Activated T-helper 1 cell treated with anti-CD3 and anti-CD28 coated beads, Interleukin-12 subunit alpha, Interleukin-12 subunit beta, Interleukin-2, Interleukin-4 antibody, amounts not matched to agents 30 ng/mL and 10 ng/mL and 1 ng/mL, durations not matched to agents 14 hours and 24 hours and 36 hours (primary cell): ENCODE measurements at regions of chr3 and their contacts with region 1.

Region 1: DNA sequence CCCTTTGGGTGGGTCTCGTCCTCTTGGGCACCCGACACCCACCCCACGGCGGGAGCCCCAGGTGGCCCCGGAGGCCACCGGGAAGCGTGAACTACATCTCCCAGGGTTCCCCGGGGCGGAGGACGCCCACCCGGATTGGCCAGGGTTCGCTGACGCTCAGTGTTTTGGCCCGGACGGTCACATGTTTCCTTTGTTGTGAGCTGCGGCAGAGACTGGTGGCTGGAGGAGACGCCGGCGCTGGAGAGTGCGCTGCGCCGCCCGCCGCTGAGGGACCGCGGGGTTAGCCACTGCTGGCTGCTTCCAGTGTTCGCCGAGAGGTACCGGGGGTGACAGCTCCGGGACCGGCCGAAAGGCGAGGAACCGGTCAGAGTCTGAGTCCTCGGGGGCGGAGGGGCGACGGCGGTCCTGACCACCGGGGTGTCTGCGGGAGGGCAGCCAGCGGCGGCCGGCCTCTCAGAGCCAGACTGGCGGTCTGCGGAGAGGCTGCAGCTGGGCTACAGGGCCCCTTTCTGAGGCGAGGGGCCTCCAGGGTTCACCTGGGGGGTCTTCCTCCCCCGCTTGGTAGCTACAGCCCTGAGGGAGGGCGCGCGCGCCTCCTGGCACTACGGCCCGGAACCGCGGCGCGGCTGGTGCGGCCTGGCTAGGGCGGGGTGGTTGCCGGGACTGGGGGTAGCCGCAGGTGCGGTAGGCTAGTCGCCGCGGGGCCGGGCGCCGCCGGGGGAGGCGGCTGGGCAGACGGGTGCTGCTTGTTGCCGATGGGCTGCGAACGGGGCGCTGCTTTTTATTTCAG is at the start of gene KLHL24:
- DNase-seq: peak; percentile 89
- H3K4me3 Mint-ChIP-seq: peak within 1 kb of the TSS; percentile 92
- H3K27ac Mint-ChIP-seq: peak within 1 kb of the TSS; percentile 97
- H3K4me1 Mint-ChIP-seq: peaks cover 24% of the 10 kb centered on the region
- H3K27me3 Mint-ChIP-seq: peaks cover 2% of the 10 kb centered on the region
- total RNA-seq, gene KLHL24: 8.2 and 8.7 TPM in 2 replicates

Region 2: DNA sequence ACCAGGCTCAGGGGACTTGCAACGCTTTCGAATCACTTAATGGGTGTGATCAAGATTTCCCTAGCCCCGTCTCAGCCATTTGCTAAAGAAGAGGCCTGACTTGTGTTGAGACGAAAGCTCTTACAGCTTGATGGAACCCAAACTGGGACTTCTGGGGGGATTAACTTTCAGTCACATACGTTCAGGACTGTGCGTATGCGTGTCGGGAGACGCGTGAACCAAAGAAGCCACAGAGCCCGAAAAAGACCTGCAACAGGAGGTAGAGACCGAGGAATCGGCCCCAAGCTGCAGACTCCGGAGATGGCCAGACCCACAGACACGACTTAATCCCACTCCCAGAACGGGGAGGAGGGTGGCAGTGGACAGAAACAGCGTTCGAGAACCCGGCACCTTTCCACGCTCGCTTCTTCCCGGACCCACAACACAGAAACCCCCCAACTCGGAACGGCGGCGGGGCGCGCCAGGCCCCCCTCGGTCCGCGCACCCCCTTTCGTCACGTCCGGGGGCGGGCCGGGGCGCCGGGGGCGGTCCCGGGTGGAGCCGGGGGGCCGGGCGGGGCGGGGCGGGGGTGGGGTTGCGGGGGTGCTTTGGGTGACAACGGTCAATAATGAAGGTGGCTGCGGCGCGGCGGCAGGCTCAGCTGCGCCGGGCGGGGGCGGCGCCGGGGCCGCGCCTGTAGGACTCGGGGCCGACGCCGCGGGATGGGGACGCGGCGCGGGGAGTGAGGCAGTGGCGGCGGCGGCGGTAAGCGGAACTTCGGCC is 842.5 kb before region 1 on chr3 and contains the start of gene ATP11B:
- intact Hi-C with region 1: loop called (anchors 5 kb)
- DNase-seq: peak; percentile 75
- H3K4me3 Mint-ChIP-seq: peak within 1 kb of the TSS; percentile 94
- H3K27ac Mint-ChIP-seq: peak within 1 kb of the TSS; percentile 98
- H3K4me1 Mint-ChIP-seq: peaks cover 34% of the 10 kb centered on the region
- H3K27me3 Mint-ChIP-seq: no peaks in the 10 kb centered on the region
- total RNA-seq, gene ATP11B: 92.3 and 95.1 TPM in 2 replicates

Region 3: GRCh38 chr3:183178629-183179549 is 456.7 kb before region 1 on chr3:
- intact Hi-C with region 1: no loop called
- DNase-seq: peak; percentile 17
- H3K4me3 Mint-ChIP-seq: peak overlapping the region; percentile 79
- H3K27ac Mint-ChIP-seq: peak overlapping the region; percentile 18
- H3K4me1 Mint-ChIP-seq: peaks cover 17% of the 10 kb centered on the region
- H3K27me3 Mint-ChIP-seq: peaks cover 36% of the 10 kb centered on the region

Region 4: DNA sequence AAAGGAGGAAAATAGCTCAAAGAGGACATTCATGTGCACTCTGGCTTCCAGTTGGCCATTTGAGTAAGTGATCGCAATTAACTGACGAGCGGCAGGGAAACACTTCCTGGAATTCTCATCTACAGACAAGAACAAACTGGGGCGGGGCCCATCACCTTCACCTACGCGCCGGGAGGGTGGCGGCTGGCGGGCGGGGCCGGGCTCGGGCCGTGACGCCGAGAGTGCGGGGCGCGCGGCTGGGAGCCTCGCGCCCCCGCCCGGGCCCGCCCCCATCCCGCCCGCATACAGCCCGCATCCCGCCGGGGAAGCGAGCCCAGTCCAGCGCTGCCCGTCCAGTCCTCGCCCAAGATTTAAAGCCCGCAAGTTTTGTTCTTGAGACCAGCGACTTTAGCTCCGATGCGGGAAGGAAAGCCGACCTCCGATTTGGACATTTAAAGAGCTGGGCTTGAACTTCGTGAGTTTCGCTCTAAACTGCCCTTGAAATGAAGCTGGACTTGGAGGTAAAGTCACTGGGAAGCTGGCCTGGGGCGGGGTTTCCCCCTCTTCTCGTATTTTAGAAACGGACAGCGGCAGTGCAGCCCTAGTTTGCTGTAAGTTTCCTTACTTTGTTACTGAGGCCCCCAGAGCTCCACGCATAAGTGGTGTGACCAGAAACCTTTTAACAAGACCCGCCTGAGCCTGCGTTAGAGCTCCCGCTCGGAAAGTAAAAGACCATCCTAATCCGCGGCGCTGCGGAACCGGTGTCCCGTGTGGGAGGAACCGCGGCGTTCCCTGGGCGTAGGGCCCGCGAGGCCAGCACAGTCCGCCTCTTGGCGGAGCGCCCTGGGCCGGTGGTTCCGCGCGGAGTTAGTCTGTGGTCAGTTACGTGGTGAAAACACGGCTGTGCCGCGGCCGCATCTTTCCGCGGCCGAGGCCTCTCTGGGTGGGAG is 382.4 kb before region 1 on chr3 and contains the start of gene B3GNT5:
- intact Hi-C with region 1: loop called (anchors 5 kb)
- DNase-seq: peak; percentile 11
- H3K4me3 Mint-ChIP-seq: peak within 1 kb of the TSS; percentile 81
- H3K27ac Mint-ChIP-seq: peak within 1 kb of the TSS; percentile 52
- H3K4me1 Mint-ChIP-seq: peaks cover 18% of the 10 kb centered on the region
- H3K27me3 Mint-ChIP-seq: peaks cover 10% of the 10 kb centered on the region
- total RNA-seq, gene B3GNT5: 17.0 and 17.7 TPM in 2 replicates

Region 5: DNA sequence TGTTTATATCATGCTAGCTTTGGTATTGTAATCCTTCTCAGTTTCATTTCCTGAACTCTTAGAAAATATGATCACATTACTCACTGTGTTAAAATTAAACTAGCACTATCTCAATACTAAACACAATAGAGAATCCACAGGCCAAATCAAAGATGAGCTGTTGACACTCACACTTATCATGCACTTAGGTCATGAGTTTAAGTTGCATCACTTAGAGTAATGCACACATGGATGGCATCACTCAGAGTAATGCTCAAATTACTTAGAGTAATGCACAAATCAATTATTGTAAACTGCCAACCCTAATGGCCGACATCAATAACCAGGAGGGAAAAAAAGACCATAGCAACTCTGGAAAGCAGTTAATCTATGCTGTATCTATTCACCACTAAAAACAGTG is 167.2 kb before region 1 on chr3:
- intact Hi-C with region 1: loop called (anchors 1 kb)
- DNase-seq: no peak
- H3K4me3 Mint-ChIP-seq: peak overlapping the region; percentile 12
- H3K27ac Mint-ChIP-seq: peak overlapping the region; percentile 75
- H3K4me1 Mint-ChIP-seq: peaks cover 16% of the 10 kb centered on the region
- H3K27me3 Mint-ChIP-seq: peaks cover 2% of the 10 kb centered on the region

Region 6: GRCh38 chr3:183697610-183698317 is 62.1 kb after region 1 on chr3 and contains the start of gene YEATS2:
- intact Hi-C with region 1: loop called (anchors 1 kb)
- DNase-seq: peak; percentile 65
- H3K4me3 Mint-ChIP-seq: peak within 1 kb of the TSS; percentile 88
- H3K27ac Mint-ChIP-seq: peak within 1 kb of the TSS; percentile 94
- H3K4me1 Mint-ChIP-seq: peaks cover 37% of the 10 kb centered on the region
- H3K27me3 Mint-ChIP-seq: no peaks in the 10 kb centered on the region
- total RNA-seq, gene YEATS2: 54.2 and 57.4 TPM in 2 replicates

Region 7: DNA sequence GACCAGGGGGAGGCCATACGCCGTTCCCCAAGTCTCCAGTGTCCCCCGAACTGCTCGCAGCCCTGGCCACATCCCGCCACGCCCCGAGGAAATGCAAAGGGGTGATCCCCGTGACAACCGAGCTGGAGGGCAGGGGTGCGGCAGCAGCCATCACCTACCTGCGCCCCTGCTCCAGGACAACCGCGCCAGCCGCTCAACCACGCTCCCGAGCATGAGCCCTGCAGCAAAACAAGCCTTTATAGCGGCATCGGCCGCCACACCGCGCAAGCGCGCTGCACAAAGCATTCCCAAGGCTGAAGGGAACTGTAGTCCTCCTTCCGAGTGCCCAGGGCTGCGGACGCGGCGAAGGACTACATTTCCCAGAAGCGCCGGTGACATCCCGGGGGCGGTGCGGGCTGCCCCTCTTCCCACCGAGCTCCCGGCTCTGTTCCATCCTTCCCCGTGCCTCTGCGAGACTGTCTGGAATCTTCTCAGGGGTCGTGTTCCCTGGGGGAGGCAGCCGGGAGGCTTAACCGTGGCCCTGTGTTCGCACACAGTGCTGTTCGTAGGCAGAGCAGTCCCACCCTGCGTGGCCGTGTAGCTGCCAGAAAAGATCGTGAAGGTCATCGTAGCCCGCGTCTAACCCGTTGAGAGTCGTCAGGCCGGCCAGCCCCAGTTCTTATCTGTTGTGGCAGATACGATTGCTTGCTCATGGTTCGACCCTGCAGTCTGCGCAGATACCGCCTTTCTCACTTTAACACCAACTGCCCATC is 382.2 kb after region 1 on chr3 and contains the start of gene ABCC5:
- intact Hi-C with region 1: loop called (anchors 1 kb)
- DNase-seq: peak; percentile 78
- H3K4me3 Mint-ChIP-seq: peak within 1 kb of the TSS; percentile 99
- H3K27ac Mint-ChIP-seq: peak within 1 kb of the TSS; percentile 85
- H3K4me1 Mint-ChIP-seq: peaks cover 30% of the 10 kb centered on the region
- H3K27me3 Mint-ChIP-seq: peaks cover 23% of the 10 kb centered on the region
- total RNA-seq, gene ABCC5: 18.0 and 18.7 TPM in 2 replicates

Region 8: GRCh38 chr3:184185461-184186308 is 550.1 kb after region 1 on chr3 and contains the start of gene ABCF3:
- intact Hi-C with region 1: loop called (anchors 5 kb)
- DNase-seq: peak; percentile 99
- H3K4me3 Mint-ChIP-seq: peak within 1 kb of the TSS; percentile 98
- H3K27ac Mint-ChIP-seq: peak within 1 kb of the TSS; percentile 89
- H3K4me1 Mint-ChIP-seq: peaks cover 25% of the 10 kb centered on the region
- H3K27me3 Mint-ChIP-seq: no peaks in the 10 kb centered on the region
- total RNA-seq, gene ABCF3: 75.2 and 76.4 TPM in 2 replicates